Endothelial cell of umbilical vein (primary cell): ENCODE measurements at regions of chr1 and their contacts with region 1.

Region 1: GRCh38 chr1:172674831-172675613 is 16.1 kb downstream of the FASLG start:
- DNase-seq: no peak
- H3K4me3 ChIP-seq: no peak overlapping the region
- H3K27ac ChIP-seq: no peak overlapping the region
- H3K4me1 ChIP-seq: peaks cover 2% of the 10 kb centered on the region
- H3K27me3 ChIP-seq: peaks cover 6 to 7% of the 10 kb centered on the region in 2 experiments
- CTCF ChIP-seq: no peak
- POLR2A ChIP-seq: no peak

Region 2: GRCh38 chr1:172662464-172663109 is 12.4 kb before region 1 on chr1:
- CTCF ChIA-PET with region 1: interaction called, 12 read pairs
- POLR2A ChIA-PET with region 1: interaction called, 4 read pairs
- dilution Hi-C with region 1: no loop called
- intact Hi-C with region 1: no loop called
- DNase-seq: peak; percentile 11
- H3K4me3 ChIP-seq: no peak overlapping the region
- H3K27ac ChIP-seq: no peak overlapping the region
- H3K4me1 ChIP-seq: no peaks in the 10 kb centered on the region
- H3K27me3 ChIP-seq: peaks cover 0 to 2% of the 10 kb centered on the region in 2 experiments
- CTCF ChIP-seq: no peak
- POLR2A ChIP-seq: no peak

Region 3: DNA sequence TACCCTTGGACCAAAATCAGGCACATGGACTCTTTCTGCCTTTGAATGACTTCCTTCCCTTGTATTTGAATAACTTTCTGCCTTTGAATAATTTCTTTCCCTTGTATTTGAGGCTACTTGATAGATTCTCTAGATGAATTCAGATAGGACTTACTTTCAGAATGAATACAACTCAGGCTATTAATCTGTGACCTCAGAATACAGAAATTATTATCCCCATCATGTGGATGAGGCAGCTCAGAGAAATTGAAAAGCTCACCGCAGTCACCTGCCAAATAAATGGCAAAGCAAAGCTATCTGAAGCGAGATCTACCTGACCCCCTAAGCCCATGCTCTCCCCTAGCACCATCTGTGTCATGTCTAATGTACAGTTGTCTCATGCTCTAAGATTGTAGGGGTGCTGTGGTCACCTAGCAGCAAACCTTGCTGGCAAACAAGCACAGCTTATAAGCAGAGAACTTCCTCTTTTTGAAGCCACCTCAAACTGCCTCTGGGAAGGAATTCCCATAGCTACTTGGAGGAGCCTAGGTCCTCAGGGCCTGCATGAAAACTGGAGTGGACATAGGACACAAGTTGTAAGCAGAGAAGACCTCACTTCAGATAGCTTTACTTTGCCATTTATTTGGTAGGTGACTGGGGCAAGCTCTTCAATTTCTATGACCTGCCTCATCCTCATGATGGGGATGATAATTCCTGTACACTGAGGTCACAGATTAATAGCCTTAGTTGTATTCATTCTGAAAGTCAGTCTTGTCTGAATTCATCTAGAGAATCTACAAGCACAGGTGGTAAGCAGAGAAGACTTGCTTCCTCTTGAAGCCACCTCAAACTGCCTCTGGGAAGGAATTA is 50.0 kb after region 1 on chr1:
- CTCF ChIA-PET with region 1: no interaction called
- POLR2A ChIA-PET with region 1: no interaction called
- dilution Hi-C with region 1: no loop called
- intact Hi-C with region 1: no loop called
- DNase-seq: no peak
- H3K4me3 ChIP-seq: no peak overlapping the region
- H3K27ac ChIP-seq: no peak overlapping the region
- H3K4me1 ChIP-seq: no peaks in the 10 kb centered on the region
- H3K27me3 ChIP-seq: no peaks in the 10 kb centered on the region
- CTCF ChIP-seq: no peak
- POLR2A ChIP-seq: no peak